ENCODE measurements at regions of chr1 and their contacts with region 1.

Region 1: GRCh38 chr1:230197644-230198567 is 130.9 kb downstream of the GALNT2 start:
- DNase-seq: no peak
- H3K4me3 ChIP-seq: no peak overlapping the region
- H3K27ac ChIP-seq: no peak overlapping the region
- H3K4me1 ChIP-seq: peaks cover 0 to 3% (median 1%) of the 10 kb centered on the region in 4 experiments; a peak in 3 of 7 replicates
- H3K27me3 ChIP-seq: no peaks in the 10 kb centered on the region
- CTCF ChIP-seq: no peak
- EP300 ChIP-seq: no peak
- POLR2A ChIP-seq: no peak
- RAD21 ChIP-seq: no peak

Region 2: GRCh38 chr1:230167419-230167852 is 30.5 kb before region 1 on chr1:
- CTCF ChIA-PET with region 1: no interaction called
- POLR2A ChIA-PET with region 1: no interaction called
- DNase-seq: peak; percentile 23 to 62
- H3K4me3 ChIP-seq: no peak overlapping the region
- H3K27ac ChIP-seq: no peak overlapping the region
- H3K4me1 ChIP-seq: peaks cover 0 to 4% (median 1%) of the 10 kb centered on the region in 4 experiments; a peak in 2 of 7 replicates
- H3K27me3 ChIP-seq: no peaks in the 10 kb centered on the region
- CTCF ChIP-seq: peak; percentile 63 to 90 (median 74)
- EP300 ChIP-seq: no peak
- POLR2A ChIP-seq: no peak
- RAD21 ChIP-seq: peak; percentile 78 to 85

Region 3: DNA sequence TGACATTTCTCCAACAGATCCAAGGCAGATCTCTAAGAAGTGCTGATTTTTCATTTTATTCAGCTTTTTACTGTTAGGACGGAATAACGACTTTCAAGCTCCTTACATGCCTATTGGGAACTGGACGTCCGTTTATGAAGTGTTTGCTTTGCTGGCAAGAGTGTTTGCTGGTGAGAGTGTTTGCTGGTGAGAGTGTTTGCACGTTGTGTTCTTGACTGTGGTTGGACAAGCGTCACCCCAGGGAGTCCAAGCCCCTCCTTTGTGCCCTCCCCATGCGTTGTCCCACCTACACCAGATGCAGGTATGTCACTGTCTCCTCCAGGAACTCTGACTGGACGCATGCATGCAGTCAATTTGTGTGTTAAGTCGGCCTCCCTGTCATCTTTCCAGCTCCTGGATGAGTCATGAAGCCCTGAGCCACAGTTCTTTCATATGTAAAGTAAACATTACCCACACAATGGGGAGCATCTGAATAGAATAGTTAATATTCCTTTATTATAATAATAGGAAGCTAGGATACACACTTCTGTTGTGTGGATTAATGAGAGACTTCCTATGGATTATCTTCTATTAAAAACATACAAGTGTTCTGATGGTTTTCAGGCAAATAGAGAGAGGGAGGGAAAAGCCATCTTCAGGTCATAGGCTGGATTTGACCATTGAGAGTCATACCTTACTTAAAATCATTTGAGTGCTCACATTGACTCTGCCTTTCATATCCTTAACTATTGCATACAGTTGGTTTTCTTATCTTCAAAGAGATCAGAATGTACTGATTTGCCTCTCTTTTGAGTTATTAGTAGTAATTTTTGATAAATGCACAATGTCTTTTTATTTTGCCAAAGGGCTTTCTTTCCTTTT is 11.7 kb before region 1 on chr1:
- CTCF ChIA-PET with region 1: interaction called, 19 read pairs
- POLR2A ChIA-PET with region 1: no interaction called
- DNase-seq: peak in 1 of 2 experiments; percentile 62
- H3K4me3 ChIP-seq: no peak overlapping the region; a peak in 1 of 8 replicates
- H3K27ac ChIP-seq: no peak overlapping the region
- H3K4me1 ChIP-seq: peaks cover 4 to 10% (median 9%) of the 10 kb centered on the region in 4 experiments; a peak in 6 of 7 replicates
- H3K27me3 ChIP-seq: no peaks in the 10 kb centered on the region
- CTCF ChIP-seq: no peak
- EP300 ChIP-seq: no peak
- POLR2A ChIP-seq: no peak
- RAD21 ChIP-seq: no peak

Region 4: GRCh38 chr1:230310381-230311163 is 112.7 kb after region 1 on chr1:
- CTCF ChIA-PET with region 1: no interaction called
- POLR2A ChIA-PET with region 1: no interaction called
- DNase-seq: peak in 1 of 2 experiments; percentile 81
- H3K4me3 ChIP-seq: no peak overlapping the region
- H3K27ac ChIP-seq: no peak overlapping the region
- H3K4me1 ChIP-seq: peaks cover 0 to 2% (median 0%) of the 10 kb centered on the region in 4 experiments; a peak in 1 of 7 replicates
- H3K27me3 ChIP-seq: no peaks in the 10 kb centered on the region
- CTCF ChIP-seq: peak; percentile 77 to 88 (median 87)
- EP300 ChIP-seq: no peak
- POLR2A ChIP-seq: no peak
- RAD21 ChIP-seq: peak; percentile 98

Measured in H1 (cell line).